Endothelial cell of umbilical vein (primary cell): ENCODE measurements at regions of chr5 and their contacts with region 1.

Region 1: GRCh38 chr5:140647042-140647341 is 438 bp downstream of the NDUFA2 start:
- DNase-seq: peak; percentile 10
- H3K4me3 ChIP-seq: peak overlapping the region; percentile 65 to 90 (median 76)
- H3K27ac ChIP-seq: peak overlapping the region; percentile 21
- H3K4me1 ChIP-seq: peaks cover 13% of the 10 kb centered on the region
- H3K27me3 ChIP-seq: no peaks in the 10 kb centered on the region
- CTCF ChIP-seq: no peak
- POLR2A ChIP-seq: no peak

Region 2: GRCh38 chr5:138805096-138805495 is 1841.9 kb before region 1 on chr5:
- CTCF ChIA-PET with region 1: no interaction called
- POLR2A ChIA-PET with region 1: no interaction called
- dilution Hi-C with region 1: no loop called
- intact Hi-C with region 1: no loop called
- DNase-seq: no peak
- H3K4me3 ChIP-seq: no peak overlapping the region
- H3K27ac ChIP-seq: no peak overlapping the region
- H3K4me1 ChIP-seq: no peaks in the 10 kb centered on the region
- H3K27me3 ChIP-seq: no peaks in the 10 kb centered on the region
- CTCF ChIP-seq: no peak
- POLR2A ChIP-seq: no peak

Region 3: GRCh38 chr5:140547508-140548299 is 99.3 kb before region 1 on chr5 and contains the start of gene EIF4EBP3:
- CTCF ChIA-PET with region 1: interaction called, 11 read pairs
- POLR2A ChIA-PET with region 1: interaction called, 14 read pairs
- dilution Hi-C with region 1: no loop called
- intact Hi-C with region 1: no loop called
- DNase-seq: peak; percentile 98
- H3K4me3 ChIP-seq: peak within 1 kb of the TSS in 1 of 3 experiments; percentile 20
- H3K27ac ChIP-seq: no peak within 1 kb of the TSS
- H3K4me1 ChIP-seq: peaks cover 24% of the 10 kb centered on the region
- H3K27me3 ChIP-seq: no peaks in the 10 kb centered on the region
- CTCF ChIP-seq: peak; percentile 45 to 69
- POLR2A ChIP-seq: no peak
- total RNA-seq, gene EIF4EBP3: 7.6 and 8.8 TPM in 2 replicates